ENCODE measurements at regions of chr1 and their contacts with region 1.

Region 1: GRCh38 chr1:160675641-160676410 is 29.0 kb upstream of the SLAMF1 start:
- DNase-seq: peak; percentile 94
- H3K4me3 ChIP-seq: peak overlapping the region in 1 of 8 donors; percentile 0
- H3K27ac ChIP-seq: peak overlapping the region in 6 of 8 donors; percentile 36 to 81 (median 60)
- H3K4me1 ChIP-seq: peaks cover 36 to 71% (median 50%) of the 10 kb centered on the region in 6 donors
- H3K27me3 ChIP-seq: no peaks in the 10 kb centered on the region
- CTCF ChIP-seq: peak; percentile 66 to 84 (median 79)
- POLR2A ChIP-seq: no peak

Region 2: GRCh38 chr1:160567858-160568682 is 107.8 kb before region 1 on chr1:
- intact Hi-C with region 1: no loop called
- DNase-seq: no peak
- H3K4me3 ChIP-seq: peak overlapping the region in 1 of 8 donors; percentile 9
- H3K27ac ChIP-seq: peak overlapping the region; percentile 33 to 89 (median 71)
- H3K4me1 ChIP-seq: peaks cover 11 to 94% (median 62%) of the 10 kb centered on the region in 6 donors
- H3K27me3 ChIP-seq: no peaks in the 10 kb centered on the region
- CTCF ChIP-seq: no peak
- POLR2A ChIP-seq: no peak

Region 3: GRCh38 chr1:160618763-160619274 is 57.0 kb before region 1 on chr1:
- intact Hi-C with region 1: loop called (anchors 10 kb)
- DNase-seq: no peak
- H3K4me3 ChIP-seq: no peak overlapping the region
- H3K27ac ChIP-seq: no peak overlapping the region
- H3K4me1 ChIP-seq: peaks cover 5 to 73% (median 29%) of the 10 kb centered on the region in 6 donors
- H3K27me3 ChIP-seq: no peaks in the 10 kb centered on the region
- CTCF ChIP-seq: peak; percentile 15 to 74 (median 60)
- POLR2A ChIP-seq: no peak

Region 4: GRCh38 chr1:160911441-160911840 is 235.6 kb after region 1 on chr1:
- intact Hi-C with region 1: no loop called
- DNase-seq: no peak
- H3K4me3 ChIP-seq: no peak overlapping the region
- H3K27ac ChIP-seq: no peak overlapping the region
- H3K4me1 ChIP-seq: no peaks in the 10 kb centered on the region
- H3K27me3 ChIP-seq: peaks cover 0 to 3% (median 0%) of the 10 kb centered on the region in 7 donors
- CTCF ChIP-seq: no peak
- POLR2A ChIP-seq: no peak